ENCODE measurements at regions of chr7 and their contacts with region 1.

Region 1: DNA sequence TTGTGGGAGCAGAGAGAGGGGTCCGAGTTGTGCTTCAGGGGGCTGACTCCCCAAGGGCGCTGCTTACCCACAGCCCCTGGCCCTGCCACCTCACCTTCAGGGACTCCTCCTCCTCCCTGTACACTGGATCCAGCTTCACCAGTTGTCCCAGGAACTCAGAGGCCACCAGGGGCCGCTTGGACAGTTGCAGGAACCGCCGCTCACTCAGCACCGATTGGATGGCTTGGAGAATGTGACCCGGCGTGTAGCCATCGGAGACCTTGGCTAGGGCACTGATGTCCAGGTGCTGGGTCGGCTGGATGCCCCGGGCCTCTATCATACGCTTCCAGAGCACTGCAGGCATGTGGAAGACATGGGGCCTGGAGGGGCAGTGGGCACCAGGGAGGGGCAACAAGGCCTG is 4.5 kb upstream of the ASB10 start:
- DNase-seq: peak; percentile 70 to 87
- ATAC-seq: peak; percentile 67 to 72 (median 71)
- H3K4me3 ChIP-seq: no peak overlapping the region
- H3K27ac ChIP-seq: peak overlapping the region; percentile 68
- H3K4me1 ChIP-seq: peaks cover 15% of the 10 kb centered on the region
- H3K27me3 ChIP-seq: no peaks in the 10 kb centered on the region
- CTCF ChIP-seq: peak; percentile 35

Region 2: DNA sequence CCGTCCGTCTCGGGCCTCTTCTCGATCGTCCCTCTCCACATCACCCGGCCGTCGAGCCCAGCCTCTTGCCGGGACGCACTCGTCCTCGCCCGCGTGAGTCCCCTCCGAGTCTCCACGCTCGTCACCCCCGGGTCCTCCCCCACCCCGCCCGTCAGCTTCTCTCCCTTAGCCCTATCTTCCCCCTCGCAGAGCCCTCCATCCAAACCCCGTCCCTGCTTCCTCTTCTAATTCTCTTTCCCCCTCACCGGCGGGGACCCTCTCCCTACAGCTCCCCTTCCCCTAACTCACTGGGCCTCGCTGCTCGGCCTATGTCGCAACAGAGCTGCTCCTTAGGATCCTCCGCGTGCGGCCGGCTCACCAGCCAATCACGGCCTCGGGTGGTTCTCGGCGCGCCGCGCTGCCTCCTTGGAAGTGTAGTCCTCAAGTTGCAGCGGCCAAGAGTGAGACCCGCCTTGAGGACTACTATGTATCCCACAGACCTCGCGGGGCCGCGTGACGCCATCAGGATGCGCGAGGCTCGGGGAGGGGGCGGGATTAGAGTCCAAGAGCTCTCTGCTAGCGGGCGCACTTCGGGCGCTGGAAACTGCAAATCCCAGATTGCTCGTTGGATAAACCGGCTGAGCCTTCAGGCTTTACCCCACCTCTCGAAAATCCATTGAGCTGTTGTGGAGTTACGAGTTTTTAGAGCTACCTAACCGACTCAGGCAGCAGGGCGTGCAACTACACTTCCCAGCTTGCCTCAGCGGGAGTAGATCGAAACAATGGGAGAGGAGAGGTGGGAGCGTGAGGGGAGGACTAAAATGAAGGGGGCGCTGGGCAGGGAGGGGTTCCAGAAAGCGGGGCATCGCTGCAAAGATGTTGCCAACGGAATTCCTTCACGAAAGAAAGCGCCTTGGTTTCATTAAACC is 35.6 kb after region 1 on chr7 and contains the start of gene ABCF2:
- intact Hi-C with region 1: loop called (anchors 2 to 5 kb)
- DNase-seq: peak; percentile 100
- ATAC-seq: peak; percentile 98 to 99 (median 99)
- H3K4me3 ChIP-seq: peak within 1 kb of the TSS; percentile 76
- H3K27ac ChIP-seq: peak within 1 kb of the TSS; percentile 80
- H3K4me1 ChIP-seq: peaks cover 24% of the 10 kb centered on the region
- H3K27me3 ChIP-seq: no peaks in the 10 kb centered on the region
- CTCF ChIP-seq: no peak
- total RNA-seq, gene ABCF2: 35.7 to 66.7 (median 57.5) TPM

Region 3: GRCh38 chr7:151244196-151244840 is 52.8 kb after region 1 on chr7:
- intact Hi-C with region 1: loop called in 1 of 2 experiments (anchors 5 kb)
- DNase-seq: peak in 1 of 2 donors; percentile 64
- ATAC-seq: no peak
- H3K4me3 ChIP-seq: peak overlapping the region; percentile 88
- H3K27ac ChIP-seq: peak overlapping the region; percentile 100
- H3K4me1 ChIP-seq: peaks cover 40% of the 10 kb centered on the region
- H3K27me3 ChIP-seq: no peaks in the 10 kb centered on the region
- CTCF ChIP-seq: peak; percentile 80

Region 4: GRCh38 chr7:151680721-151681209 is 489.2 kb after region 1 on chr7:
- intact Hi-C with region 1: no loop called
- DNase-seq: peak; percentile 64 to 84
- ATAC-seq: peak in 3 of 4 donors; percentile 38 to 59 (median 45)
- H3K4me3 ChIP-seq: no peak overlapping the region
- H3K27ac ChIP-seq: no peak overlapping the region
- H3K4me1 ChIP-seq: peaks cover 10% of the 10 kb centered on the region
- H3K27me3 ChIP-seq: no peaks in the 10 kb centered on the region
- CTCF ChIP-seq: no peak